ENCODE measurements at regions of chr1 and their contacts with region 1.

Region 1: GRCh38 chr1:153985941-153986761 is at the start of gene RAB13:
- DNase-seq: peak; percentile 86 to 93 (median 89)
- ATAC-seq: peak; percentile 78 to 89 (median 84)
- H3K4me3 ChIP-seq: peak within 1 kb of the TSS; percentile 26 to 63 (median 54)
- H3K27ac ChIP-seq: peak within 1 kb of the TSS; percentile 24 to 81 (median 54)
- H3K4me1 ChIP-seq: peaks cover 0 to 9% (median 5%) of the 10 kb centered on the region in 3 donors
- H3K27me3 ChIP-seq: no peaks in the 10 kb centered on the region
- CTCF ChIP-seq: no peak
- total RNA-seq, gene RAB13: 36.8 to 68.8 (median 47.2) TPM

Region 2: DNA sequence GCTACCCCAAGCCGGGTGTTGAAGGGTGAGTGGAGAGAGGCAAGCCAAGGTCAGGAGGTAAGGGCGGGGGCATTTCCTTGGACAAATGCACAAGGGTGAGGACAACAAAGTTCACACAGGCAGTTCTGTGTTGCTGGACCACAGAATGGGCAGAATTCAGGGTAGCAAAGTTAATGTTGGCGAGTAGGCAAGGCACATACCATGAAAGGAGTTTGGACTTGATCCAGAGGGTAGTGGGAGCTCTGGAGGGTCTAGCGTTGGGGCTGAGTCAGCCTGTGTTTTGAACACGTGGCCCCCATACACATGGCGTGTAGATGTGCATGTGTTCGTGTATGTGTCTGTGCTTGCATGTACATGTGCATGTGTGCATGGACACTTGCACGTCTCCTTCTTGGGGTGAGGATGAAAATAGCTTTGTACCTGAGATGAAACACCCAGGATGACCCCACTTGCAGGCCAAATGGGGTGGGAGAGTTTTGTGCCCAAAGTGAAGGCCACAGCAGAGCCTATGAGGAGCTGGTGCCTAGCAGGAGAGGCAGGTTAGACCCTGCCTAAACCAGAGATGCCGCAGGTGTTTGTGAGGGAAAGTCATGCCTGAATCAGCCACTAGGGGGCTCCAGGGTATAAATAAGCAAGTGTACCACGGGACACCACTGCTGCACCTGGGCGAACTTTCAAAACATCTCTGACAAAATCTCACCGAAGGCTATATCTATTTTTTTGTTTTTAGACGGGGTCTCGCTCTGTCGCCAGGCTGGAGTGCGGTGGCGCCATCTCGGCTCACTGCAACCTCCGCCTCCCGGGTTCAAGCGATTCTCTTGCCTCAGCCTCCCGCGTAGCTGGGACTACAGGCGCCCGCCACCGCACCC is 189.1 kb before region 1 on chr1:
- intact Hi-C with region 1: loop called (anchors 5 to 10 kb)
- DNase-seq: peak; percentile 72 to 87 (median 82)
- ATAC-seq: peak; percentile 81 to 94 (median 84)
- H3K4me3 ChIP-seq: no peak overlapping the region
- H3K27ac ChIP-seq: no peak overlapping the region
- H3K4me1 ChIP-seq: no peaks in the 10 kb centered on the region
- H3K27me3 ChIP-seq: no peaks in the 10 kb centered on the region
- CTCF ChIP-seq: peak; percentile 92 to 94 (median 94)

Region 3: GRCh38 chr1:153803470-153804056 is 182.6 kb before region 1 on chr1:
- intact Hi-C with region 1: loop called (anchors 5 to 10 kb)
- DNase-seq: no peak
- ATAC-seq: no peak
- H3K4me3 ChIP-seq: no peak overlapping the region
- H3K27ac ChIP-seq: no peak overlapping the region
- H3K4me1 ChIP-seq: no peaks in the 10 kb centered on the region
- H3K27me3 ChIP-seq: no peaks in the 10 kb centered on the region
- CTCF ChIP-seq: no peak

Measured in pancreas (tissue), 10 donors.